Activated naive CD4-positive, alpha-beta T cell treated with anti-CD3 and anti-CD28 coated beads for 36 hours (primary cell): ENCODE measurements at regions of chr3 and their contacts with region 1.

Region 1: GRCh38 chr3:16912400-16913263 is 27.9 kb downstream of the PLCL2 start:
- DNase-seq: no peak
- H3K4me3 Mint-ChIP-seq: no peak overlapping the region
- H3K27ac Mint-ChIP-seq: peak overlapping the region; percentile 57
- H3K4me1 Mint-ChIP-seq: peaks cover 77% of the 10 kb centered on the region
- H3K27me3 Mint-ChIP-seq: no peaks in the 10 kb centered on the region

Region 2: DNA sequence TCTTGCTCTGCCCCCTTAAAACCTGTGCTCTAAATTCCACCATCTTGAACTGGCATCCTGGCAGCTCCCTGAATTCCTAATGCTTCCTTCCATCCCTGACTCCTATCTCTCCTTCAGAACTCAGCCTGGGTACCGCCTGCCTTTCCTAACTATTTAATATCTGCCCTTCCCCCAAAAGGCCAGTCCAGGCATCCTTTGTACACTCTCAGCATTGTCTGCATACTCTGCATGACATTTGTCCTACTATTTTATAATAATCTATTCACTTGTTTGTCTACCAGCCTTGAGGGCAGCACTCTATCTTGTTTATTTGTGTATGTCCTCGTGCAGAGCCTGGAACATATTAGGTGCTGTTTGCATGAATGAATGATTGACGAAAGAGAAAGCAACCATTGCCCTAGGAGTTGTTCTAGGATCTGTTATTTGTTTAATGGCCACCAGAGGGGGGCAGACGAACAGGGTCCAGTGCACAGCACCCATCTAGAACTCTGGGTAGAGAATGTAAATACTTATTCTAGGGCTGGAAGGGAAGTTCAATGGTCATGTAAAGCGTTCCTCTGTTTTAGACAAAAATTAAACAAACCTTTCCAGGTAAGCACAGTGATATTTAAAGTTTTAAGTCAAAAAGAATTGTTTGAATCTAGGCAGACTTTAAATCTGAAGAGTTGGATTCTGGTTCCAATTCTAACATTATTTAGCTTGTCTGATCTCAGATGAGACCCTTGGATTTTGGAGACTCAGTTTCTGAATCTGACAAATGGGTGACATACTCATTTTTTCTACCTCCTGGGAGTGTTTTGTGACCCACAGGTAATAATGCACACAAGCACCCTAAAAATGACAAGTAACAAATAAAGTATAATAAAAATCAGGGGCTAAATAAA is 864.0 kb before region 1 on chr3:
- CTCF ChIA-PET with region 1: no interaction called
- intact Hi-C with region 1: no loop called
- DNase-seq: peak; percentile 68
- H3K4me3 Mint-ChIP-seq: no peak overlapping the region
- H3K27ac Mint-ChIP-seq: no peak overlapping the region
- H3K4me1 Mint-ChIP-seq: peaks cover 10% of the 10 kb centered on the region
- H3K27me3 Mint-ChIP-seq: no peaks in the 10 kb centered on the region

Region 3: GRCh38 chr3:16512435-16513140 is 400.0 kb before region 1 on chr3:
- CTCF ChIA-PET with region 1: no interaction called
- intact Hi-C with region 1: no loop called
- DNase-seq: no peak
- H3K4me3 Mint-ChIP-seq: peak overlapping the region; percentile 92
- H3K27ac Mint-ChIP-seq: peak overlapping the region; percentile 100
- H3K4me1 Mint-ChIP-seq: peaks cover 73% of the 10 kb centered on the region
- H3K27me3 Mint-ChIP-seq: no peaks in the 10 kb centered on the region

Region 4: DNA sequence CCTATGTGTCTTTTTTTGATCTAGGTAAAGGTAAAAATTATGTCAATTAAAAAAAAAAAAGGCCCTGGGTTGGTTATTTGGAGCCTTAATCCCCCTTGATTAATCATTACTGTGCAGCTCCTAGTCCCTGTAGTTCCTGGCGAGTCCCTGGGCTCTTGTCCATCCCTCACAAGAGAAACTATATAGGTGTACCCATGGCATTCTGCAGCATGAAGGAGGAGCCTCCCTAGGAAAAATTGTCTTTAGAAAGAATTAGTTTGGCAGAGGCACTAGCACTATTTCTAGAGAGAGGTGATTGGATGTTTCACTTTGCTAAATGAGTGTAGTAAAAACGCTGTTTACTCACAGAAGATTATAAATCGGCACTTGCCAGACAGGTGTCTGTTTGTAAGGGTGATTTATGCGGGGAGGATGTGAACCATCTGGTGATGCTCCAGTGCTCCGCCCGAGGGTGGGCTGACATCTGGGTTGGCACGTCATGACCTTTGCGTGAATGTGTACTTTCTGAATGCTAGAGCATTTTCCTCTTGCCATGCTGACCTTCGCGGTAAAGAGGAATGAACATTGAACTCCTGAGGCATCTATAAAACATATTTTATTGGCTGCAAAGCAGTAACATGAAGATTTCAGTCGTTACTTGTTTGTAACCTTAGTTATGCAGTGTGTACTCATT is 15.2 kb before region 1 on chr3:
- CTCF ChIA-PET with region 1: interaction called, 3 read pairs
- intact Hi-C with region 1: loop called (anchors 2 kb)
- DNase-seq: peak; percentile 80
- H3K4me3 Mint-ChIP-seq: peak overlapping the region; percentile 48
- H3K27ac Mint-ChIP-seq: peak overlapping the region; percentile 77
- H3K4me1 Mint-ChIP-seq: peaks cover 82% of the 10 kb centered on the region
- H3K27me3 Mint-ChIP-seq: no peaks in the 10 kb centered on the region

Region 5: DNA sequence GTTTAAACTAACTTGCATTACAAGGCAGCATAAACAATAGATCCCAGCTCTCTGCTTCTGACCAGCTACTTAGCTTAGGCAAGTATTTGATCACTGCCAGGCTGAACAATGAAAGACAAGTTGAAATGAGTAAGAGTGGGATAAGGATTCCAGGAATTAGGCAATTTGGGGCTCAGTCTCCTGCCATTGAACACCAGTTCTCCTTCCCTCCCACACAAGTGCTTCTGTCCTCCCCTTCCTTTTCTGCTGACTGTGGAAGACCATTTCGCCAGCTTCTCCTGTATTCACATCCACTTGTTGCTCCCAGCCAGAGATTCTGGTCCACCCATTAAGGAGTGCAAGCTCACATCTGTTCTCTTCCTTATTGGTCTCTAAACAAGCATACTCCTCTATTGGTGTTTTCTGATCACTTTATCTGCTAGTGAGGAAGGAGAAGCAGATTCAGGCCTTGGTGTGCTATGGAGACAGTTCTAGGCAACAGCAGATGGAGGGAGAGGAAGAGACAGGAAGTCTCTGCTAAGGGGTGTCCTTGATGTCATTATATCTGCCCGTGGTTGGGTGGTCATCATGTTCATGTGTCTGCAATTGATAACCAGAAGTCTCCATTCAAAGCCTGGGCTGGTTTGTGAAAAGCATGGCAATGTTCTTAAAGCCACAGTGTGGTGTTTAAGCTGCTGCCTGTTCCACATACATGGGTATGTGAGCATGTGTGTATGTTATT is 93.7 kb after region 1 on chr3:
- CTCF ChIA-PET with region 1: no interaction called
- intact Hi-C with region 1: no loop called
- DNase-seq: no peak
- H3K4me3 Mint-ChIP-seq: no peak overlapping the region
- H3K27ac Mint-ChIP-seq: no peak overlapping the region
- H3K4me1 Mint-ChIP-seq: peaks cover 62% of the 10 kb centered on the region
- H3K27me3 Mint-ChIP-seq: no peaks in the 10 kb centered on the region

Region 6: GRCh38 chr3:17238032-17238431 is 325.4 kb after region 1 on chr3:
- CTCF ChIA-PET with region 1: no interaction called
- intact Hi-C with region 1: no loop called
- DNase-seq: no peak
- H3K4me3 Mint-ChIP-seq: no peak overlapping the region
- H3K27ac Mint-ChIP-seq: no peak overlapping the region
- H3K4me1 Mint-ChIP-seq: peaks cover 20% of the 10 kb centered on the region
- H3K27me3 Mint-ChIP-seq: no peaks in the 10 kb centered on the region